IMR-90 (cell line): ENCODE measurements at regions of chr12 and their contacts with region 1.

Region 1: GRCh38 chr12:107402041-107403022 is 283.3 kb upstream of the PWP1 start:
- DNase-seq: peak; percentile 62
- ATAC-seq: peak; percentile 66; the same call in 1 of the 2 replicates
- H3K4me3 ChIP-seq: no peak overlapping the region
- H3K27ac ChIP-seq: no peak overlapping the region
- H3K4me1 ChIP-seq: peaks cover 6% of the 10 kb centered on the region
- H3K27me3 ChIP-seq: no peaks in the 10 kb centered on the region
- CTCF ChIP-seq: peak; percentile 72
- POLR2A ChIP-seq: no peak
- RAD21 ChIP-seq: peak; percentile 77

Region 2: DNA sequence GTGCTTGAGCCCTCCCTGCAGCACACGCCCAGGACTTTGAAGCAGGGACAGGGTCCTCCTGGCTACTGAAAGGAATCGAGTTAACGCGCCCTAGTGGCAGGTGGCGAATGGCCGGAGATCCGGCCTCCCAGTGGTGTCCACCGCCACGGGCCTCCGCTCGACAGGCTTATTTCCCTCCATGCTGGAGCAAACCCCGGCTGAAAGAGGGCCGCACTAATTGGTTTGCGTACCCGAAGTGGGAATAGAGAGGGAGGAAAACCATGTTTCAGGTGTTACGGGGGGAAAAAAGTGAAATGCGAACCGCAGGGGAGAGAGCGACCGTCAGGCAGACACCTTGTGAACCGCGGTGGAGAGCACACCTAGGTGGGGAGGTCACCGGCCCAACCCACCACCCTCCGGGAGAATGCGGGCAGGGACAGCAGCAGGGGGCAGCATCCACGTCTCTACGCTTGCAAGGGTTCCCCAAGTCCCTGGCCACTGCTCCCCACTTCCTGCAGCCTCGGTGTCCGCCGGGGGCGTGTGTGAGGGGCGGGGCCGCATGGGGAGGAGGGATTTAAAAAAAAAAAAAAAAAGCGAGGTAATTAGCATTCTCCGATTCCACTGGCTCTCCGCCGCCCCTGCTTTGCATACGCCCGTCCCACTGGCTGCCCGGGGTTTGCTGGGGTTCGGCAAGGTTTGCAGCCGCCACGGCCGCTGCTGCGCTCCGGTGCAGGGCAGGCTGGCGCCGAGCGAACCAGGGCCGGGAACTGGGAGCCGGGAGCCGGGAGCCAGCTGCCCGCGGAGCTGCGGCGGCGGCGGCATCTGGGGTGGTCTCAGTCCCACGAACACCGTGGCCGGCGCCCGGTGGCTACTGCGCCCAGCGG is 84.3 kb before region 1 on chr12:
- CTCF ChIA-PET with region 1: interaction called, 4 read pairs
- POLR2A ChIA-PET with region 1: interaction called, 12 read pairs
- dilution Hi-C with region 1: no loop called
- in situ Hi-C with region 1: no loop called
- intact Hi-C with region 1: loop called (anchors 2 kb)
- DNase-seq: peak; percentile 88
- ATAC-seq: peak; percentile 94
- H3K4me3 ChIP-seq: peak overlapping the region; percentile 48
- H3K27ac ChIP-seq: no peak overlapping the region; the same call in 1 of the 2 replicates
- H3K4me1 ChIP-seq: no peaks in the 10 kb centered on the region; the same call in 1 of the 2 replicates
- H3K27me3 ChIP-seq: peaks cover 19% of the 10 kb centered on the region
- CTCF ChIP-seq: no peak
- POLR2A ChIP-seq: no peak
- RAD21 ChIP-seq: 0 out of 2 replicates have a peak, but pooled peaks have one; percentile 6